Endothelial cell of umbilical vein (primary cell): ENCODE measurements at regions of chr3 and their contacts with region 1.

Region 1: DNA sequence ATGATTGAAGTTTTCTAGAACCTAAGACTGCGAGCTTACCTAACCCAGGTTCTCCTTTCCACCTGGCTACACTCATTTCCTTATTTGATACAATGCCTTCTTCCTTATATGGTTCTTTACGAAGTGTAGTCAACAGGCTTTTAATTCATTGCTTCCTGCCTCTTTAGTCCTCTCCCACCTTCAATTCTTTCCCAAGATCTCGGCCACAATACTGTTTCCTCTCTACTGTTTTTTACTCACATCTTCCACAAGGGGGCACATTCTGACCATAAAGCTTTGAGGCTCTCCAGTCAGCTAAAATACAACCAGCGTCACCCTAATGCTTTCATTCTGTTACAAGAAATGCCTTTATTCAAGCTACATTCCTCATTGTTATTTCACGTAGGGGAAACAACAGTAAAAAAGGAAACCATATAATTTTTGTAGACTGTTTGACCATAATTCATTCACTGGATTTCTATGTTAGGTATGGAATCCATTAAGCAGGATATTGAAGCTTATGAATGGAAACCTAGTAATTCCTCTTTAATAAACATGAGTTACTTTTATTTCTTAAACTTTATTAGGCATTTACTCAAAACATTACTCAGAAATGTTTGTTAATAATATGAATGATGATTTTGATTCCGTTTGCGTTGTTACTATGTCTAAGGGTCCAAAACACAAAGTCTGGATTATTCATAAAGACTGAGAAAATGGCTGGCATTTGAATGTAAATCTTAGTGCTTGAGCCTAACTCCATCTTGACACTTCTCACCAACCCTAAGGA is 29.5 kb upstream of the VEPH1 start:
- DNase-seq: peak; percentile 94
- H3K4me3 ChIP-seq: peak overlapping the region; percentile 40 to 96 (median 86)
- H3K27ac ChIP-seq: peak overlapping the region; percentile 100
- H3K4me1 ChIP-seq: peaks cover 67% of the 10 kb centered on the region
- H3K27me3 ChIP-seq: no peaks in the 10 kb centered on the region
- CTCF ChIP-seq: peak; percentile 61 to 68
- POLR2A ChIP-seq: peak; percentile 17

Region 2: GRCh38 chr3:157159762-157160657 is 372.7 kb before region 1 on chr3 and contains the start of gene CCNL1:
- CTCF ChIA-PET with region 1: interaction called, 7 read pairs
- POLR2A ChIA-PET with region 1: interaction called, 12 read pairs
- dilution Hi-C with region 1: no loop called
- intact Hi-C with region 1: loop called (anchors 1 kb)
- DNase-seq: peak; percentile 96
- H3K4me3 ChIP-seq: peak within 1 kb of the TSS; percentile 41 to 97 (median 66)
- H3K27ac ChIP-seq: peak within 1 kb of the TSS; percentile 94
- H3K4me1 ChIP-seq: peaks cover 50% of the 10 kb centered on the region
- H3K27me3 ChIP-seq: no peaks in the 10 kb centered on the region
- CTCF ChIP-seq: no peak
- POLR2A ChIP-seq: peak; percentile 98
- total RNA-seq, gene CCNL1: 116 and 119 TPM in 2 replicates

Region 3: GRCh38 chr3:157354722-157355121 is 178.0 kb before region 1 on chr3:
- CTCF ChIA-PET with region 1: interaction called, 3 read pairs
- POLR2A ChIA-PET with region 1: interaction called, 5 read pairs
- dilution Hi-C with region 1: no loop called
- intact Hi-C with region 1: loop called (anchors 2 kb)
- DNase-seq: peak; percentile 64
- H3K4me3 ChIP-seq: no peak overlapping the region
- H3K27ac ChIP-seq: peak overlapping the region; percentile 8
- H3K4me1 ChIP-seq: peaks cover 41% of the 10 kb centered on the region
- H3K27me3 ChIP-seq: no peaks in the 10 kb centered on the region
- CTCF ChIP-seq: peak; percentile 47 to 62
- POLR2A ChIP-seq: no peak

Region 4: GRCh38 chr3:157572559-157573270 is 40.0 kb after region 1 on chr3:
- CTCF ChIA-PET with region 1: interaction called, 457 read pairs
- POLR2A ChIA-PET with region 1: interaction called, 23 read pairs
- dilution Hi-C with region 1: no loop called
- intact Hi-C with region 1: loop called (anchors 1 kb)
- DNase-seq: peak; percentile 83
- H3K4me3 ChIP-seq: no peak overlapping the region
- H3K27ac ChIP-seq: no peak overlapping the region
- H3K4me1 ChIP-seq: no peaks in the 10 kb centered on the region
- H3K27me3 ChIP-seq: no peaks in the 10 kb centered on the region
- CTCF ChIP-seq: peak; percentile 71 to 75
- POLR2A ChIP-seq: no peak

Region 5: GRCh38 chr3:157865352-157866000 is 332.8 kb after region 1 on chr3:
- CTCF ChIA-PET with region 1: interaction called, 4 read pairs
- POLR2A ChIA-PET with region 1: no interaction called
- dilution Hi-C with region 1: no loop called
- intact Hi-C with region 1: loop called (anchors 2 kb)
- DNase-seq: peak; percentile 26
- H3K4me3 ChIP-seq: no peak overlapping the region
- H3K27ac ChIP-seq: no peak overlapping the region
- H3K4me1 ChIP-seq: no peaks in the 10 kb centered on the region
- H3K27me3 ChIP-seq: no peaks in the 10 kb centered on the region
- CTCF ChIP-seq: peak; percentile 74 to 79
- POLR2A ChIP-seq: no peak

Region 6: GRCh38 chr3:158434412-158435038 is 901.8 kb after region 1 on chr3:
- CTCF ChIA-PET with region 1: interaction called, 13 read pairs
- POLR2A ChIA-PET with region 1: no interaction called
- dilution Hi-C with region 1: no loop called
- intact Hi-C with region 1: loop called (anchors 1 kb)
- DNase-seq: peak; percentile 77
- H3K4me3 ChIP-seq: no peak overlapping the region
- H3K27ac ChIP-seq: no peak overlapping the region
- H3K4me1 ChIP-seq: no peaks in the 10 kb centered on the region
- H3K27me3 ChIP-seq: no peaks in the 10 kb centered on the region
- CTCF ChIP-seq: peak; percentile 44 to 55
- POLR2A ChIP-seq: no peak